ENCODE measurements at regions of chr15 and their contacts with region 1.

Region 1: GRCh38 chr15:85858586-85859375 is 64.1 kb upstream of the KLHL25 start:
- DNase-seq: peak; percentile 86
- H3K4me3 Mint-ChIP-seq: peak overlapping the region; percentile 54
- H3K27ac Mint-ChIP-seq: no peak overlapping the region
- H3K4me1 Mint-ChIP-seq: peaks cover 5% of the 10 kb centered on the region
- H3K27me3 Mint-ChIP-seq: peaks cover 22% of the 10 kb centered on the region

Region 2: GRCh38 chr15:85582131-85583079 is 276.4 kb before region 1 on chr15:
- CTCF ChIA-PET with region 1: no interaction called
- POLR2A ChIA-PET with region 1: no interaction called
- intact Hi-C with region 1: no loop called
- DNase-seq: peak; percentile 79
- H3K4me3 Mint-ChIP-seq: peak overlapping the region; percentile 86
- H3K27ac Mint-ChIP-seq: peak overlapping the region; percentile 93
- H3K4me1 Mint-ChIP-seq: peaks cover 79% of the 10 kb centered on the region
- H3K27me3 Mint-ChIP-seq: no peaks in the 10 kb centered on the region

Region 3: DNA sequence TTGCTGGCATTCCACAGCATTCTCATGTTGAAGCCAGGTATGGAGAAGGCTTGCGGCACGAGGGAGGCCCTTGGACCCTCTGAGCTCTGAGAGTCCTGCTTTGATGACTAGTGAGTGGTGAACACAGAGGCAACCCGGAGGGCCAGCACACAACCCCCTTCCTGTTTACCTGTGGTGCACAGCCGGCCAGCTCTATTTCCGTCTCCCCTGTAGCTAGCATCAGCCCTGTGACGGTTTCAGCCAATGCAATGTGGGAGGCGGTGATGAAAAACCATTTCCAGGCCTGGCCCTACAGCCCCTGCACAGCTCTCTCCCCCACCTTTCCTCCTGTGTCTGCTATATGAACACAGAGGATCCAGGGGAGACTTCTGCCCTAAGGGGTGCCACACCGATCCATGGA is 12.8 kb after region 1 on chr15:
- CTCF ChIA-PET with region 1: interaction called, 12 read pairs
- POLR2A ChIA-PET with region 1: no interaction called
- intact Hi-C with region 1: no loop called
- DNase-seq: no peak
- H3K4me3 Mint-ChIP-seq: no peak overlapping the region
- H3K27ac Mint-ChIP-seq: no peak overlapping the region
- H3K4me1 Mint-ChIP-seq: no peaks in the 10 kb centered on the region
- H3K27me3 Mint-ChIP-seq: peaks cover 18% of the 10 kb centered on the region

Region 4: DNA sequence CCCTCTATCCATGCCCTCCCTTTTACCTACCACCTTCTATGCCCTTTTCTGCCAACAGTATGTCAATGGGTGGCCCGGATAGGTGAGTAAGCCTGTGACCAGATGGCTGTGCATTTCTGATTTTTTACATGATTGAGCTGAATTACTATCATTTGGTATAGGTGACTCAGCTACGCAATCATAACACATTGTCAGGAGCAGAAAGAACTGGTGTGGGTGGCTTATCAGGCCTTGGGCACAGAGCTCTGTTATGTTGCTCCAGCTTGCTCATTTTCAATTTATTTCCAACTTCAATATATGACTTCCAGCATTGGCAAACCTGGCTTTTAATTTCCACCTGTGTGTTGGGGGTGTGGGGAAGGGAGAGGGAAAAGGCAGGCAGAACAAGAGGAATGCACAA is 134.3 kb after region 1 on chr15:
- CTCF ChIA-PET with region 1: no interaction called
- POLR2A ChIA-PET with region 1: no interaction called
- intact Hi-C with region 1: no loop called
- DNase-seq: no peak
- H3K4me3 Mint-ChIP-seq: no peak overlapping the region
- H3K27ac Mint-ChIP-seq: no peak overlapping the region
- H3K4me1 Mint-ChIP-seq: no peaks in the 10 kb centered on the region
- H3K27me3 Mint-ChIP-seq: peaks cover 1% of the 10 kb centered on the region

Region 5: DNA sequence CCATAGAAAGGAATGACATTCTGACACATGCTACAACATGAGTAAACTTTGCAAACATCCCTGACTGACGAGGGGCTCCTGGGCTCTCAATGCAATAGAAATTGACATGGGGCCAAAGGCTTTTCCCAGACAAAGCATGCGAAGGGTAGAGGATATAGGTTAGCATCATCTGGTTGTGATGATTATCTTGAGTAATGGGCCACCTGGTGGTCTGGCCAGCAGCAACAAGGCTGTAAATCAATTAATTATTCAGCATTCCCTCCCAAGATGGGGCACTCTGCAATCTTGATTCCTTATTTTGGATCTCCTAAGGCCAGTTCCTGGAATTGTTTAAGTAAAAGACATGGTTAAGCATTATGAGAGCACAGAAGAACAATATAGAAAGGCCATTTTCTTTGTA is 320.1 kb after region 1 on chr15:
- CTCF ChIA-PET with region 1: interaction called, 3 read pairs
- POLR2A ChIA-PET with region 1: no interaction called
- intact Hi-C with region 1: loop called (anchors 10 kb)
- DNase-seq: no peak
- H3K4me3 Mint-ChIP-seq: no peak overlapping the region
- H3K27ac Mint-ChIP-seq: no peak overlapping the region
- H3K4me1 Mint-ChIP-seq: peaks cover 3% of the 10 kb centered on the region
- H3K27me3 Mint-ChIP-seq: peaks cover 34% of the 10 kb centered on the region

Region 6: DNA sequence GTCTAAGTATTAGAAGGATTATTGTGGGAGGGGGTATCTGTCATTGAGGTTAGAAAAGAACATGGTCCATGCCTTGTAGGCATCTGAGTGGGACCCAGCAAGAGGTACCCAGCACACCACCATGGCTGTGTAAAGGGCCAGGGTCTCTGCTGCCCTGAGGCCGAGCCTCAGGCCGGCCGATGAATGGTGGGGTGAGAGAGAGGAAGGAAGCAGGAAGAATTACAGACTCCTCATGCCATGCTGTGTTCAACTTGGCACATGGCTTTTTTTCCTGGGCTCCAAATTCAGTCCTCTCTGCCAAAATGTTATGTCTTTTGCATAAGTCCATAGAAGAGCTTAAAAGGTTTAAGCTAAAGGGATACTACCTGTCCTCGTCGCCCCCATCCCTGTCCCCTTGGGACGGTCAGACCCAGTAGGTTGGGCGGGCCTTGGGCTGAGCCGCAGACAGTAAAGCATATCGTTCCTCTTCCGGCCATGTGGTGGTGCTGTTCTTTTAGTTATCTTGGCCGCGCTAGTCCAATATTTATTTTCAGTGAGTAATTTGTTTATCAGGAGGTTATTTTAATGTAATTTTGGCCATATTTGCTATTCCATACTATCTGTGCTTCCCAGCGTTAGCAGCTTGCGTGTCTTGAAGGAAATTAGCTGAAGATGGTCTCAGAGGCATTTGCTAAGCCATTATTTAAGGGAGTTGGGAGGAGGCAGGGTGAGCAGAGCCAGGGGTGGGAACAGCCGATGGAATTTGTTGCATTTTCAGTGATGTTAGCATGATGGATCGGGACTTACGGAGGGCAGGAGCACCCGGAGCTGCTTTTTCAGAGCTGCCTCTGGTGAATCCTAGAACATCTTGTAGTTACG is 373.3 kb after region 1 on chr15:
- CTCF ChIA-PET with region 1: interaction called, 3 read pairs
- POLR2A ChIA-PET with region 1: no interaction called
- intact Hi-C with region 1: loop called (anchors 10 kb)
- DNase-seq: peak; percentile 34
- H3K4me3 Mint-ChIP-seq: no peak overlapping the region
- H3K27ac Mint-ChIP-seq: no peak overlapping the region
- H3K4me1 Mint-ChIP-seq: peaks cover 3% of the 10 kb centered on the region
- H3K27me3 Mint-ChIP-seq: peaks cover 27% of the 10 kb centered on the region

Region 7: GRCh38 chr15:86624261-86625036 is 765.7 kb after region 1 on chr15:
- CTCF ChIA-PET with region 1: no interaction called
- POLR2A ChIA-PET with region 1: no interaction called
- intact Hi-C with region 1: loop called (anchors 10 kb)
- DNase-seq: peak; percentile 91
- H3K4me3 Mint-ChIP-seq: peak overlapping the region; percentile 24
- H3K27ac Mint-ChIP-seq: peak overlapping the region; percentile 55
- H3K4me1 Mint-ChIP-seq: peaks cover 38% of the 10 kb centered on the region
- H3K27me3 Mint-ChIP-seq: no peaks in the 10 kb centered on the region

Measured in activated CD4-positive, alpha-beta memory T cell treated with anti-CD3 and anti-CD28 coated beads for 36 hours (primary cell).